Sciatic nerve (tissue), 2 donors: ENCODE measurements at regions of chr9 and their contacts with region 1.

Region 1: DNA sequence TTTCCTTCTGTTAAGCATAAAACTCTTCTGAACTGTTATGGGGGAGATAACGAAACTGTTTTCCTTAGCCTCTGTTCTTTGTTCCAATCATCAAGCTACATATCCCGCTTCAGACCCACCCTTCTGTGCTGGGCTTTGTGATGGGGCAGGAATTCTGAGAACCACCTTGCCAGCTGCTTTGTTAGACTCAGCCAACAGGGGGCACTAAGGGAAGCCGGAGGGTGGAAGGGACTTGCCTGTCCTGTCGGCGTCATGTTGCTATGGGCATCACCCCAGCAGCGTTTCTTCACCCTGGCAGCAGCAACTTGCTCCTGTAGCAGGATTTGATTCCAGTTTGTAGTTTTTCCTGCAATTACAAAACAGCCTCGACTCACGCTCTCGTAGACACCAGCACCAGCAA is 169.1 kb downstream of the CAAP1 start:
- DNase-seq: no peak
- ATAC-seq: peak; percentile 62

Region 2: DNA sequence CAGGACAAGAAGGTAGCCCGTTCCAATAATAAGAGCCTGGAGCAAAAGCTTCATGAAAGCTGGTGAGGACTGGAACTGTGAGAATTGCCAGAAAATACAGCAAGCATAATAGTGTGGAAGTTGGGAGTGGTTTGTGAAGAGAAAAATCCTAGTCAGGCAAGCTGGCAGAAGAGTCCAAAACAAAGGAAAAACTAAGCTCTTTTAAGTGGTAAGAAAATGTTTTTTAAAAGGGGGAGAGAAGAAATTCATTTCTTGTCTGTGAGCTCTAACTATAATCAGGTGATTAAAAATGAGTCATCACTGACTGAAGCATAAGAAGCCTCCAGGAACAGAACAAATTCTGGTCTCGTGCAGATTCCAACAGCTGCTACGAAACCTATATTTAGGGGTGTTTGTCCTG is 66.5 kb after region 1 on chr9:
- intact Hi-C with region 1: no loop called
- DNase-seq: no peak
- ATAC-seq: no peak

Region 3: DNA sequence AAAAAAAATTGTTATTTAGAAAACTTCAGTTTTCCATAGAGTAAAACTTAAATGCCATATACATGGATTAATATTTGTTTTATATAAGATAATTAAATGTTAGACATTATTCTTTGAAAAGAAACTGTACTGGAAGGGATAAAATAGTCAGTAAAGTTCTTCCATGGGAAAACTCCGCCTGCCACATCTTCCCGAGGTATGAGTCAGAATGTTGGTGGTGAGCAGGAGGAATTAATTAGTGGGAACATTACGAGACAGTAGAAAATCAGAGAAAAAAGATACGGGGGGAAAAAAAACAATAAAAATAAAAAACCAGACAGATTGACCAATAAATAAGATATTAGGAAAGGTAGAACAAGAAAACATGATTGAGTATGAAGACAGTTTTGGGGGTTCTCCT is 1780.1 kb after region 1 on chr9:
- intact Hi-C with region 1: loop called (anchors 5 kb)
- DNase-seq: no peak
- ATAC-seq: no peak